ENCODE measurements at regions of chr2 and their contacts with region 1.

Region 1: GRCh38 chr2:177164584-177165052 is 48.0 kb upstream of the HNRNPA3 start:
- DNase-seq: peak; percentile 65 to 77 (median 71)
- ATAC-seq: peak; percentile 89
- H3K4me3 ChIP-seq: peak overlapping the region; percentile 25
- H3K4me3 Mint-ChIP-seq: no peak overlapping the region
- H3K27ac ChIP-seq: peak overlapping the region; percentile 66
- H3K27ac Mint-ChIP-seq: no peak overlapping the region
- H3K4me1 ChIP-seq: peaks cover 11 to 16% of the 10 kb centered on the region in 2 donors
- H3K4me1 Mint-ChIP-seq: peaks cover 0 to 33% (median 12%) of the 10 kb centered on the region in 7 donors
- H3K27me3 ChIP-seq: no peaks in the 10 kb centered on the region
- H3K27me3 Mint-ChIP-seq: peaks cover 0 to 7% (median 0%) of the 10 kb centered on the region in 5 donors

Region 2: GRCh38 chr2:177212106-177212890 is 47.7 kb after region 1 on chr2 and contains the start of gene HNRNPA3:
- CTCF ChIA-PET with region 1: interaction called, 11 read pairs
- POLR2A ChIA-PET with region 1: interaction called, 29 read pairs
- intact Hi-C with region 1: loop called (anchors 1 kb)
- DNase-seq: peak; percentile 99 to 100 (median 100)
- ATAC-seq: peak; percentile 93
- H3K4me3 ChIP-seq: peak within 1 kb of the TSS; percentile 87
- H3K4me3 Mint-ChIP-seq: peak within 1 kb of the TSS; percentile 88 to 96 (median 94)
- H3K27ac ChIP-seq: peak within 1 kb of the TSS; percentile 99
- H3K27ac Mint-ChIP-seq: peak within 1 kb of the TSS; percentile 98 to 100 (median 99)
- H3K4me1 ChIP-seq: peaks cover 38 to 43% of the 10 kb centered on the region in 2 donors
- H3K4me1 Mint-ChIP-seq: peaks cover 27 to 60% (median 48%) of the 10 kb centered on the region in 7 donors
- H3K27me3 ChIP-seq: no peaks in the 10 kb centered on the region
- H3K27me3 Mint-ChIP-seq: peaks cover 0 to 6% (median 0%) of the 10 kb centered on the region in 5 donors
- total RNA-seq, gene HNRNPA3: 151 to 311 (median 184) TPM

Region 3: GRCh38 chr2:177296040-177296439 is 131.4 kb after region 1 on chr2:
- CTCF ChIA-PET with region 1: interaction called, 41 read pairs
- POLR2A ChIA-PET with region 1: interaction called, 10 read pairs
- intact Hi-C with region 1: loop called (anchors 1 kb)
- DNase-seq: peak in 6 of 9 donors; percentile 27 to 52 (median 41)
- ATAC-seq: peak; percentile 70
- H3K4me3 ChIP-seq: no peak overlapping the region
- H3K4me3 Mint-ChIP-seq: no peak overlapping the region
- H3K27ac ChIP-seq: no peak overlapping the region
- H3K27ac Mint-ChIP-seq: peak overlapping the region in 3 of 9 donors; percentile 22 to 56 (median 32)
- H3K4me1 ChIP-seq: peaks cover 0 to 1% of the 10 kb centered on the region in 2 donors
- H3K4me1 Mint-ChIP-seq: peaks cover 0 to 34% (median 23%) of the 10 kb centered on the region in 7 donors
- H3K27me3 ChIP-seq: no peaks in the 10 kb centered on the region
- H3K27me3 Mint-ChIP-seq: no peaks in the 10 kb centered on the region

Region 4: GRCh38 chr2:177413703-177414102 is 249.1 kb after region 1 on chr2:
- CTCF ChIA-PET with region 1: interaction called, 87 read pairs
- POLR2A ChIA-PET with region 1: interaction called, 10 read pairs
- intact Hi-C with region 1: loop called (anchors 1 kb)
- DNase-seq: no peak
- ATAC-seq: no peak
- H3K4me3 ChIP-seq: no peak overlapping the region
- H3K4me3 Mint-ChIP-seq: no peak overlapping the region
- H3K27ac ChIP-seq: no peak overlapping the region
- H3K27ac Mint-ChIP-seq: peak overlapping the region in 6 of 9 donors; percentile 7 to 44 (median 23)
- H3K4me1 ChIP-seq: no peaks in the 10 kb centered on the region
- H3K4me1 Mint-ChIP-seq: peaks cover 6 to 57% (median 34%) of the 10 kb centered on the region in 7 donors
- H3K27me3 ChIP-seq: no peaks in the 10 kb centered on the region
- H3K27me3 Mint-ChIP-seq: no peaks in the 10 kb centered on the region

Region 5: DNA sequence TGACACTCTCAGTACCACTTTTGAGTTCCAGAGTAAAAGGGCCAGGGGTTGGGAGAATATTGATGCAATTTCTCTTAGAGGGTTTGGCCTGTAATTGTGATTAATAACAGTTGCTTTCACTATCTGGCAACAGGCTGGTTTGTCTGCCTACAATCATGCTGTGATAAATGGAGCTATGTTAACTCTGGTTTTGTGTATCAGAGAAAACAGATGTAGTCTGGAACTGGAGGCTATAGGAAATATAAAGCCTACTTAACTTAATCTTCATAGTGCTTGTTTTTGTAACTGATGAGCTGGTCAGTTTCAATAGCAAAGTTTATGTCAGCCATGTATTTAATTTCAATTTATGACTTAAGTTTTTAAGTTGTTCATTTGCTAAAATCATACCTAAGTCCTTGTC is 365.9 kb after region 1 on chr2:
- CTCF ChIA-PET with region 1: no interaction called
- POLR2A ChIA-PET with region 1: no interaction called
- intact Hi-C with region 1: no loop called
- DNase-seq: no peak
- ATAC-seq: no peak
- H3K4me3 ChIP-seq: no peak overlapping the region
- H3K4me3 Mint-ChIP-seq: no peak overlapping the region
- H3K27ac ChIP-seq: no peak overlapping the region
- H3K27ac Mint-ChIP-seq: no peak overlapping the region
- H3K4me1 ChIP-seq: no peaks in the 10 kb centered on the region
- H3K4me1 Mint-ChIP-seq: peaks cover 0 to 3% (median 0%) of the 10 kb centered on the region in 7 donors
- H3K27me3 ChIP-seq: no peaks in the 10 kb centered on the region
- H3K27me3 Mint-ChIP-seq: no peaks in the 10 kb centered on the region

Region 6: GRCh38 chr2:177604271-177605065 is 439.9 kb after region 1 on chr2:
- CTCF ChIA-PET with region 1: interaction called, 6 read pairs
- POLR2A ChIA-PET with region 1: no interaction called
- intact Hi-C with region 1: loop called (anchors 1 kb)
- DNase-seq: peak in 2 of 9 donors; percentile 3 to 5
- ATAC-seq: no peak
- H3K4me3 ChIP-seq: no peak overlapping the region
- H3K4me3 Mint-ChIP-seq: no peak overlapping the region
- H3K27ac ChIP-seq: no peak overlapping the region
- H3K27ac Mint-ChIP-seq: no peak overlapping the region
- H3K4me1 ChIP-seq: no peaks in the 10 kb centered on the region
- H3K4me1 Mint-ChIP-seq: peaks cover 0 to under 1% (median 0%) of the 10 kb centered on the region in 7 donors
- H3K27me3 ChIP-seq: no peaks in the 10 kb centered on the region
- H3K27me3 Mint-ChIP-seq: peaks cover 0 to 12% (median 6%) of the 10 kb centered on the region in 5 donors

Region 7: GRCh38 chr2:177763532-177764265 is 599.1 kb after region 1 on chr2:
- CTCF ChIA-PET with region 1: interaction called, 14 read pairs
- POLR2A ChIA-PET with region 1: no interaction called
- intact Hi-C with region 1: loop called (anchors 1 kb)
- DNase-seq: peak; percentile 51 to 75 (median 68)
- ATAC-seq: peak; percentile 95
- H3K4me3 ChIP-seq: peak overlapping the region; percentile 20
- H3K4me3 Mint-ChIP-seq: peak overlapping the region in 8 of 10 donors; percentile 20 to 55 (median 30)
- H3K27ac ChIP-seq: no peak overlapping the region
- H3K27ac Mint-ChIP-seq: peak overlapping the region in 1 of 9 donors; percentile 42
- H3K4me1 ChIP-seq: peaks cover 0 to 4% of the 10 kb centered on the region in 2 donors
- H3K4me1 Mint-ChIP-seq: peaks cover 0 to 11% (median 6%) of the 10 kb centered on the region in 7 donors
- H3K27me3 ChIP-seq: no peaks in the 10 kb centered on the region
- H3K27me3 Mint-ChIP-seq: peaks cover 10 to 28% (median 24%) of the 10 kb centered on the region in 5 donors

Measured in naive thymus-derived CD4-positive, alpha-beta T cell (primary cell).